Colonic mucosa (tissue), 4 donors: ENCODE measurements at regions of chr9 and their contacts with region 1.

Region 1: GRCh38 chr9:84668196-84669012 is 1.1 kb upstream of the NTRK2 start:
- DNase-seq: peak; percentile 66
- H3K4me3 ChIP-seq: peak overlapping the region; percentile 29
- H3K27ac ChIP-seq: no peak overlapping the region
- H3K4me1 ChIP-seq: no peaks in the 10 kb centered on the region
- H3K27me3 ChIP-seq: peaks cover 19% of the 10 kb centered on the region
- CTCF ChIP-seq: peak; percentile 38

Region 2: GRCh38 chr9:84411683-84412267 is 256.6 kb before region 1 on chr9:
- intact Hi-C with region 1: no loop called
- DNase-seq: no peak
- H3K4me3 ChIP-seq: no peak overlapping the region
- H3K27ac ChIP-seq: no peak overlapping the region
- H3K4me1 ChIP-seq: no peaks in the 10 kb centered on the region
- H3K27me3 ChIP-seq: no peaks in the 10 kb centered on the region
- CTCF ChIP-seq: no peak

Region 3: GRCh38 chr9:84620338-84620737 is 48.1 kb before region 1 on chr9:
- intact Hi-C with region 1: no loop called
- DNase-seq: no peak
- H3K4me3 ChIP-seq: no peak overlapping the region
- H3K27ac ChIP-seq: no peak overlapping the region
- H3K4me1 ChIP-seq: no peaks in the 10 kb centered on the region
- H3K27me3 ChIP-seq: no peaks in the 10 kb centered on the region
- CTCF ChIP-seq: no peak

Region 4: GRCh38 chr9:85425153-85425611 is 756.8 kb after region 1 on chr9:
- intact Hi-C with region 1: loop called (anchors 10 kb)
- DNase-seq: peak; percentile 65
- H3K4me3 ChIP-seq: no peak overlapping the region
- H3K27ac ChIP-seq: no peak overlapping the region
- H3K4me1 ChIP-seq: no peaks in the 10 kb centered on the region
- H3K27me3 ChIP-seq: no peaks in the 10 kb centered on the region
- CTCF ChIP-seq: peak; percentile 63